PC-3 (cell line): ENCODE measurements at regions of chr2 and their contacts with region 1.

Region 1: DNA sequence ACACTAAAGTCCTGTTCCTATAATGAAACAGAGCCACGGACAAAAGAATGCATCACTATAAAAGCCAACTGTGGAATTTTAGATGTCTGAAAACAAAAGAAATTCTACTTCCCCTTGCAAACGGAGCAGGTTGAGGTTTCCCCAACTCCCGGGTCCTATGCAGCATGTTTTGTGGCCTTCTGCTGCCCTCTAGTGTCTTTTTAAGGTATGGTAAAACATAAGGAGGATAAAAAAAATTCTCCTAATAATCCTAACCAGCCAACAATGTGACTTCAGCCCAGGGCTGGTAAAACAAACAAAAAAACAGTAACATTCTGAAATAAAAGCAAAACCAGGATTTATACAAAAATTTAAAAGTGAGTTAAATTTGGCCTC is 539.5 kb downstream of the NRXN1 start:
- DNase-seq: peak; percentile 62
- ATAC-seq: peak; percentile 80
- H3K4me3 ChIP-seq: no peak overlapping the region
- H3K27ac ChIP-seq: no peak overlapping the region
- H3K4me1 ChIP-seq: no peaks in the 10 kb centered on the region
- H3K27me3 ChIP-seq: 0 out of 2 replicates have a peak, but pooled peaks cover 3% of the 10 kb centered on the region
- CTCF ChIP-seq: peak; percentile 79

Region 2: DNA sequence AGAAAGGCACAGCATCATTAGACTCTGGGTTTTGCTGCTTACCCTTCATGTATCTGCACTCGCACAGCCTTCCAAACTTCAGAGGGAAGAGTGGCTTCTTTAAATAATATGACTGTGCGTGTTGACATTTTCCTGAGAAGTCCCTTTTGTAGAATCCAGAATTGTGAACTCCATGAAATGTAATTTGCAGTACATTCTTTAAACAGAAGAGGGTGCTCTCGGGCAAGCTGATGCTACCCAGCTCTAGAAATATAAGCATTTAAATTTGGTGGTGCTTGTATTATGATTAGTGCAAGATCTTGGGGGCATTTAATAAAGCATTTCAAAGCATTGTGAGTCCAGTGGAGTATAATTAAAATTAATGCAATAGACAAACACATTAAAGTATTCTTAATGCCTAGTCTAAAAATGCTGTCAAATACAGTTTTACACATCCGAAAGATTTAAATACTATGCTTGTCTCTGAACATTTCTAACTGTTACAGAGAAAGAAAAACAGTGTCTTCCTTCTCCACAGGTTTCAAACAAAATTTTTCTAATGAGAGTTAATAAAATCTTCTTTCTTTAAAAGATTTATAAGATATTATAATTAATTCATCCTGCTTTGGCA is 1892.2 kb before region 1 on chr2:
- CTCF ChIA-PET with region 1: no interaction called
- POLR2A ChIA-PET with region 1: no interaction called
- intact Hi-C with region 1: loop called (anchors 5 kb)
- DNase-seq: peak; percentile 84
- ATAC-seq: peak; percentile 63
- H3K4me3 ChIP-seq: no peak overlapping the region
- H3K27ac ChIP-seq: no peak overlapping the region
- H3K4me1 ChIP-seq: peaks cover 8% of the 10 kb centered on the region
- H3K27me3 ChIP-seq: no peaks in the 10 kb centered on the region
- CTCF ChIP-seq: peak; percentile 81

Region 3: GRCh38 chr2:48624696-48625095 is 1867.8 kb before region 1 on chr2:
- CTCF ChIA-PET with region 1: no interaction called
- POLR2A ChIA-PET with region 1: no interaction called
- intact Hi-C with region 1: loop called (anchors 5 kb)
- DNase-seq: no peak
- ATAC-seq: no peak
- H3K4me3 ChIP-seq: no peak overlapping the region
- H3K27ac ChIP-seq: no peak overlapping the region
- H3K4me1 ChIP-seq: no peaks in the 10 kb centered on the region
- H3K27me3 ChIP-seq: 0 out of 2 replicates have a peak, but pooled peaks cover 6% of the 10 kb centered on the region
- CTCF ChIP-seq: no peak

Region 4: DNA sequence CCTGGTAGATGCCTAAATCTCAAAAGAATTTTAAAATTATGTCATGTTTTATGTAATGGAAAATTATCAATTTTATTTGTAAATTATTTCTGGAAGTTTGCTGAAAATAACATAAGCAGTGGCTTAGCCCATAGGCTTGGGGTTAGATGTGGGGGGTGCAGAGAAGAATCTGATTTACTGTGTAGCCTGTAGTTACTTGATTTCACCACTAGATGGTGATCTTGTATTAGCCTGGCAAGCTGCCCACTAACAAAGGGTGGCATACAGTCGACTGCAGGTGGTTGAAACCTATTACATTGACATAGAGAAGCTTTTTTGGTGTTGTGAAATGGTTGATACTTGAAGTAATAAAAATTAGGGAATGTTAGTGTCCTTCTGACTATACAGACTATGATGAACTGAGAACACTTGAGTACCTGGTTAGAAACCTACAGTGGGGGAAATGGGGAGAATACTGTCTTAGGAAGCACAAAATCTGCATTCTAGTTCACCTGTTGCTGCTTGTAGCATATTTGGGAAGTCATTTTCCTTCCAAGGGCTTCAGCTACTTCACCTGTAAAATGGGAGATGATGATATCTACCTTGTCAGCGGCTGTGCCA is 1545.9 kb before region 1 on chr2:
- CTCF ChIA-PET with region 1: no interaction called
- POLR2A ChIA-PET with region 1: no interaction called
- intact Hi-C with region 1: loop called (anchors 1 kb)
- DNase-seq: peak; percentile 67
- ATAC-seq: peak; percentile 67
- H3K4me3 ChIP-seq: no peak overlapping the region
- H3K27ac ChIP-seq: no peak overlapping the region
- H3K4me1 ChIP-seq: no peaks in the 10 kb centered on the region
- H3K27me3 ChIP-seq: peaks cover 8% of the 10 kb centered on the region; the same call in 1 of the 2 replicates
- CTCF ChIP-seq: peak; percentile 90

Region 5: GRCh38 chr2:49687918-49688317 is 804.5 kb before region 1 on chr2:
- CTCF ChIA-PET with region 1: no interaction called
- POLR2A ChIA-PET with region 1: no interaction called
- intact Hi-C with region 1: loop called (anchors 5 kb)
- DNase-seq: peak; percentile 9
- ATAC-seq: no peak
- H3K4me3 ChIP-seq: no peak overlapping the region
- H3K27ac ChIP-seq: no peak overlapping the region
- H3K4me1 ChIP-seq: no peaks in the 10 kb centered on the region
- H3K27me3 ChIP-seq: no peaks in the 10 kb centered on the region
- CTCF ChIP-seq: peak; percentile 57

Region 6: DNA sequence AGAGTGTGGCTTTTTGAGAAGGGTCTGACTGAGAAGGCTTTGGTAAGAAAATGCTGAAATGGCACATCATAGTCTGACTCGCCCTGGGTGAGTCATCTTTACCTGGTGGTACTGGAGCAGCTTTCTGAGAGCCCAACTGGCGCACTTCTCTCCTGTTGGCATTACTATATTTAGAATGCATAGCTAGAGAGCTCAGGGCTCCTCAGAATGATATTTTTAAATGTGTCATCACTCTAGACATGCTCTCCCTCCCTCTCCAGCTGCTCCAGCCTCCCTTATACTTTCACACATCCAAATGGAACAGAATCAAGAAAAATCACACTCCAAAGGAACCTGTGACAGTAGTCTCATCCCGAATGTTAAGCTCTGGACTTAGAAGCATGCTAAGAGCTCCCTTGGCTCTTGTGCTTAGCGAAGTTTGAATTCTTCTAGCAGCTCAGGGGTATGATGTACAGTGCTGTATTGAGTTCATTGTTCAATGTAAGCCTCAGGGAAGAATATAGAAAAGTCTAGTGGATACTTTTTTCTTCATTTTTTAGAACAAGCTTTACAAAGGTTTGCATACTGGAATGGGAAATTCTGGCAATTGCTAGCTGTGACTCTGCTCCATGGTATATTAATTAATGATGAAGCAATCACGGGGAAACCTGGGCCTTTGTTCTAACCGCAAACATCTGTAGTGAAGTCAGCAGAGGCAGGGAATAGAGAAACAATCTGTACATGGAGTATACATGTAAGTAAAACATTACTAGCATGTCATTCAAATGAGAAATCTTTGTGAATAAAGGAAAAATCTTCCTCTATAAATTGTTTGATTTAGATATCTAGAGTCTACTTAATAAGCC is 1290.7 kb after region 1 on chr2:
- CTCF ChIA-PET with region 1: interaction called, 15 read pairs
- POLR2A ChIA-PET with region 1: no interaction called
- intact Hi-C with region 1: no loop called
- DNase-seq: peak; percentile 74
- ATAC-seq: peak; percentile 88
- H3K4me3 ChIP-seq: no peak overlapping the region
- H3K27ac ChIP-seq: no peak overlapping the region
- H3K4me1 ChIP-seq: peaks cover 10% of the 10 kb centered on the region
- H3K27me3 ChIP-seq: no peaks in the 10 kb centered on the region
- CTCF ChIP-seq: no peak